Dorsolateral prefrontal cortex (tissue), 120 donors: ENCODE measurements at regions of chr12 and their contacts with region 1.

Region 1: DNA sequence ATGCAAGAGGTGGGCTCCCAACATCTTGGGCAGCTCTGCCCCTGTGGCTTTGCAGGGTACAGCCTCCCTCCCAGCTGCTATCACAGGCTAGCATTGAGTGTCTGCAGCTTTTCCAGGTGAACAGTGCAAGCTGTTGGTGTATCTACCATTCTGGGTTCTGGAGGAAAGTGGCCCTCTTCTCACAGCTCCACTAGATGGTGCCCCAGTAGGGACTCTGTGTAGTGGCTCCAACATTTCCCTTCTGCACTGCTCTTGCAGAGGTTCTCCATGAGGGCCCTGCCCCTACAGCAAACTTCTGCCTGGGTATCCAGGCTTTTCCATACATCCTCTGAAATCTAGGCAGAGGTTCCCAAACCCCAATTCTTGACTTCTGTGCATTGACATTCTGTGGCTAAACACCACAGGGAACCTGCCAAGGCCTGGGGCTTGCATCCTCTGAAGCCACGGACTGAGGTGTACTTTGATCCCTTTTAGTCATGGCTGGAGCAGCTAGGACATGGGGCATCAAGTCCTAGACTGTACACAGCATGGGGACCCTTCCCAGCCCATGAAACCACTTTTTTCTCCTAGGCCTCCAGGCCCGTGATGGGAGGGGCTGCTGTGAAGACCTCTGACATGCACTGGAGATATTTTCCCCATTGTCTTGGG is 24.0 kb upstream of the SLC38A1 start:
- DNase-seq: no peak
- H3K4me3 ChIP-seq: no peak overlapping the region
- H3K27ac ChIP-seq: no peak overlapping the region
- H3K27me3 ChIP-seq: no peaks in the 10 kb centered on the region
- CTCF ChIP-seq: peak in 2 of 56 donors; percentile 6 to 8

Region 2: GRCh38 chr12:46160101-46160980 is 132.5 kb before region 1 on chr12:
- intact Hi-C with region 1: loop called in 1 of 2 experiments (anchors 10 kb)
- DNase-seq: no peak
- H3K4me3 ChIP-seq: no peak overlapping the region
- H3K27ac ChIP-seq: no peak overlapping the region
- H3K27me3 ChIP-seq: no peaks in the 10 kb centered on the region
- CTCF ChIP-seq: no peak